Activated CD4-positive, alpha-beta memory T cell treated with anti-CD3 and anti-CD28 coated beads for 36 hours (primary cell): ENCODE measurements at regions of chr6 and their contacts with region 1.

Region 1: DNA sequence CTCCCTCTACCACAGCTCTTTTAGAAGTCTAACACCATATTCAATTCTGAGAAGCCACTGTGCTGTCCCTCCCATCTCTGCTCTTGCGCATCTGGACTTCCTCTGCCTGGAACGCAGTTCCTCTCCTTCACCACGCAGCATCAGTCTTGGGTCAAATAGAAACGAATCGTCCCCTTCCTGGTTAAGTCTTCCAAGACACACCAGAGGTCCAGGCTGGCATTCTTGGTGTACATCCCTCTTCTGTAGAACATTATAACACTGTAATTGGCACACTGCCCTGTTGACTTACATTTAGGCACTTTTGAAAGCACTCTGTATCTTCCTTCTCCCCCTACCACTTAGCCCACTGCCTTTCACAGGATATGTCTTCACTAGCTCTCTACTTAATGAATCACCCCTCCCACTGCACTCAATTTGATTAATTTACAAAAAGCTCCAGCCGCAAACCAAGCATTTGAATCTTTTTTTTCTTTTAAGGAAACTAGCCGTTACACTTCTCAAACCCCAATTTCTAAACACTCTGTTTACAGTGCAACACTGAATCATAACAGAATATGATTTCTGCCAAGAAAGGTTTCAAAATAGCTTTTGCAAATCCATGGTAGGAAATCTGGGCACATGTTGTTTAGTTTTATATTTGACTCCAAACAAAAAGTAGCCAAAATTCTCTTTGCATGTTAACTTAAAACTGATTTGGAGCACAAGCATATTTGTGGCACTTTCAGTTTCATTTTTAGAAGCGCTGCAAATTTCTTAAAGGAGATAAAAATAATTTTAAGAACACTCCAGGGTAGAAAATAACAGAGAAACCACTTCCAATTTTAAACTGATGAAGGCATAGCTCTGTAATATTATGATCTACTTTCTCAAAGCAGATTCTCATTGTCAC is 140.7 kb upstream of the CARMIL1 start:
- DNase-seq: peak; percentile 81
- H3K4me3 Mint-ChIP-seq: peak overlapping the region; percentile 89
- H3K27ac Mint-ChIP-seq: peak overlapping the region; percentile 99
- H3K4me1 Mint-ChIP-seq: peaks cover 40% of the 10 kb centered on the region
- H3K27me3 Mint-ChIP-seq: no peaks in the 10 kb centered on the region

Region 2: GRCh38 chr6:24974182-24975171 is 164.0 kb before region 1 on chr6:
- CTCF ChIA-PET with region 1: no interaction called
- POLR2A ChIA-PET with region 1: no interaction called
- intact Hi-C with region 1: loop called (anchors 1 kb)
- DNase-seq: peak; percentile 69
- H3K4me3 Mint-ChIP-seq: peak overlapping the region; percentile 48
- H3K27ac Mint-ChIP-seq: peak overlapping the region; percentile 90
- H3K4me1 Mint-ChIP-seq: peaks cover 64% of the 10 kb centered on the region
- H3K27me3 Mint-ChIP-seq: no peaks in the 10 kb centered on the region

Region 3: DNA sequence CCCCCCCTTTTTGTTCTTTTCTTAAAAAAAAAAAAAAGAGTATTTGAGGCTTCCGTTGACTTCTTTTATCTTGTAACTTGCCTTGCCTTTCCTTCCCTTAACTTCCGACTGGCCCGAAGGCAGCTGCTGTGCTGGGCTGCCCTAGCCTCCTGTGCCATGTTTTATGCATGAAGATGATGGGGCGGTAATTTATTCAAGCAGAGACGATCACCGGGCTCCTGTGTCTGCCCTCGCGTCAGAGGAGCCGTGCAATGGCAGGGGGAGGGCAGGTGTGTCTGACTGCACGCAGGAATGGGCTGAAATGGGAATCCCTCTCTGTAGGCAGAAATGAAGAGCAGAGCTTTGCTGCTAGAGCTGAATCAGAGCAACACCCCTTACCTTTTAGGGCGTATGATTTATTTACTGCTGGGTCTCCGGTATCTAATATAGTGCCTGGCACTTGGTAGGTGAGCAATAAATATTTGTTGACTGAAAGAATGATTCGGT is 96.4 kb before region 1 on chr6:
- CTCF ChIA-PET with region 1: interaction called, 3 read pairs
- POLR2A ChIA-PET with region 1: interaction called, 3 read pairs
- intact Hi-C with region 1: loop called (anchors 5 kb)
- DNase-seq: peak; percentile 69
- H3K4me3 Mint-ChIP-seq: peak overlapping the region; percentile 91
- H3K27ac Mint-ChIP-seq: peak overlapping the region; percentile 97
- H3K4me1 Mint-ChIP-seq: peaks cover 60% of the 10 kb centered on the region
- H3K27me3 Mint-ChIP-seq: no peaks in the 10 kb centered on the region

Region 4: DNA sequence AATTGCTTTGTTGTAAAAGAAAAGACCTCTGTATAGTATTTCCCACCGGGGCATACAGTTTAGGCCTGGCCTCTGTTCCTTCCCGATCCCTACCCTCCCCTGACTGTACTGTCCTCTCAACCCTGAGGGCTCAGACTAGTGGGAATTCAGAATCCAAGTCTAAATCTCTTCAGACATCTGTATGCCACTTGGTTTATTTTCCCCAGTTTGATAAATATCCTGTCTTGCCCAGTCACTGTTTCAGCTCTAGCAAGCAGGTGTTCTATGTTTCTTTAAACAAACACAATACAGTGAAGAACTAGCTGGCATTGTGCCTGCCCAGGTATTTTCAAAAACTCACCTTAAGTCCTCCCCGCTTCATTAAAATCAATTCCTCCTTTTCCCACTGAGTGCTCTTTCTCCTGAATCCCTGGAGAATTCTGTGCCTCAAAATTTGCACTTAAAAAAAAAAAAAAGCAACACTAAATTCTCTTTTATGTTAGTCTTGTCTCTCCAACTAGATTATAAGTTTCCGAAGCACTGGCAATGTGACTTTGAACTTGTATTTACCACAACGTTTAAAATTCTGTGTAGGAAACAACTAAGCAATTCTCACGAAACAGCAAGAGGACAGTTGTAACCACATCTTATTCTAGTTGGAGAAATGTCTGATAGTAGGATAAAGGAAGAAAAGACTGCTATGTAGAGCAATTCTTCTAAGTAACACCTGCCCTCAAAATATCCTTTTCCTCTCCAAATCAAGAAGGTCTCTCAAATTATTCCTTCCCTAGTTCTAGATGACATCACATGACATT is 28.7 kb after region 1 on chr6:
- CTCF ChIA-PET with region 1: interaction called, 6 read pairs
- POLR2A ChIA-PET with region 1: interaction called, 8 read pairs
- intact Hi-C with region 1: loop called (anchors 1 kb)
- DNase-seq: no peak
- H3K4me3 Mint-ChIP-seq: no peak overlapping the region
- H3K27ac Mint-ChIP-seq: no peak overlapping the region
- H3K4me1 Mint-ChIP-seq: peaks cover 40% of the 10 kb centered on the region
- H3K27me3 Mint-ChIP-seq: peaks cover 4% of the 10 kb centered on the region

Region 5: GRCh38 chr6:25250878-25251277 is 112.4 kb after region 1 on chr6:
- CTCF ChIA-PET with region 1: no interaction called
- POLR2A ChIA-PET with region 1: no interaction called
- intact Hi-C with region 1: loop called (anchors 2 kb)
- DNase-seq: peak; percentile 58
- H3K4me3 Mint-ChIP-seq: no peak overlapping the region
- H3K27ac Mint-ChIP-seq: no peak overlapping the region
- H3K4me1 Mint-ChIP-seq: peaks cover 11% of the 10 kb centered on the region
- H3K27me3 Mint-ChIP-seq: peaks cover 11% of the 10 kb centered on the region

Region 6: GRCh38 chr6:25971187-25971811 is 832.8 kb after region 1 on chr6:
- CTCF ChIA-PET with region 1: no interaction called
- POLR2A ChIA-PET with region 1: no interaction called
- intact Hi-C with region 1: loop called (anchors 5 kb)
- DNase-seq: peak; percentile 30
- H3K4me3 Mint-ChIP-seq: peak overlapping the region; percentile 20
- H3K27ac Mint-ChIP-seq: peak overlapping the region; percentile 30
- H3K4me1 Mint-ChIP-seq: peaks cover 80% of the 10 kb centered on the region
- H3K27me3 Mint-ChIP-seq: no peaks in the 10 kb centered on the region

Region 7: GRCh38 chr6:26025894-26026832 is 887.7 kb after region 1 on chr6:
- CTCF ChIA-PET with region 1: no interaction called
- POLR2A ChIA-PET with region 1: no interaction called
- intact Hi-C with region 1: loop called (anchors 1 kb)
- DNase-seq: peak; percentile 96
- H3K4me3 Mint-ChIP-seq: peak overlapping the region; percentile 87
- H3K27ac Mint-ChIP-seq: peak overlapping the region; percentile 91
- H3K4me1 Mint-ChIP-seq: peaks cover 53% of the 10 kb centered on the region
- H3K27me3 Mint-ChIP-seq: peaks cover 5% of the 10 kb centered on the region